ENCODE measurements at regions of chr10 and their contacts with region 1.

Region 1: DNA sequence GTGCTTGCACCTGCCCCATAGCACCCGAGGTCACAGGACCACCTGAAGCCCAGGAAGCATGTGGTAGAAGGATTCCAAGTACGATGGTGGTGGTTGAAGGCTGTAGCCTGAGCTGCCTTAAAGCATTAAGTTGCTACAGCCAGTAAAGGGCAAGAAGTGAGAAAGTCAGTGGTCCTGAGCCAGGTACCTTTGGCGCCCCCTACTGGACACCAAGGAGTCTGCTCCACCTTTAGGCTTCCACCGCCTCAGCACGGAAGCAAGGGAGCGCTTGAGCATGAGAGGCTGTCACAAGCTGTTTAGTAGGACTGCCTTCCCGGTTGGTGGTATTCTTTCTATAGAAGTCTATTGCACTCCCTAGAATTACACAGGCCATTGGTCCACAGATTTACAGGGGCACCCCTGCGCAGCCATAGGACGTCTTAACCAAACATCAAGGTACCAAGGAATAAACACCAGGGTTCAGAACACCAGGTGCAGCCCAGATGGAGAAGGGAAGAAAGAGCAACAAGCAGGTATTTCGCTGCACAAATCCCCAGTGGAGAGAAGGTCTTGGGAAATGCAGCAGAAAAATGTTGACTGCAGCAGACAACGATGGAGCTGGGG is 2.2 kb downstream of the CRTAC1 start:
- DNase-seq: peak; percentile 49 to 70 (median 68)
- ATAC-seq: peak; percentile 25 to 41
- H3K4me3 ChIP-seq: no peak overlapping the region
- H3K27ac ChIP-seq: no peak overlapping the region
- H3K4me1 ChIP-seq: no peaks in the 10 kb centered on the region
- H3K27me3 ChIP-seq: no peaks in the 10 kb centered on the region

Region 2: GRCh38 chr10:97736902-97737769 is 291.1 kb before region 1 on chr10 and contains the start of gene ZFYVE27:
- intact Hi-C with region 1: no loop called
- DNase-seq: peak; percentile 97 to 99 (median 99)
- ATAC-seq: peak; percentile 95 to 96
- H3K4me3 ChIP-seq: peak within 1 kb of the TSS; percentile 74
- H3K27ac ChIP-seq: peak within 1 kb of the TSS; percentile 76
- H3K4me1 ChIP-seq: peaks cover 4% of the 10 kb centered on the region
- H3K27me3 ChIP-seq: no peaks in the 10 kb centered on the region
- total RNA-seq, gene ZFYVE27: 14.8 to 20.6 (median 17.7) TPM

Region 3: DNA sequence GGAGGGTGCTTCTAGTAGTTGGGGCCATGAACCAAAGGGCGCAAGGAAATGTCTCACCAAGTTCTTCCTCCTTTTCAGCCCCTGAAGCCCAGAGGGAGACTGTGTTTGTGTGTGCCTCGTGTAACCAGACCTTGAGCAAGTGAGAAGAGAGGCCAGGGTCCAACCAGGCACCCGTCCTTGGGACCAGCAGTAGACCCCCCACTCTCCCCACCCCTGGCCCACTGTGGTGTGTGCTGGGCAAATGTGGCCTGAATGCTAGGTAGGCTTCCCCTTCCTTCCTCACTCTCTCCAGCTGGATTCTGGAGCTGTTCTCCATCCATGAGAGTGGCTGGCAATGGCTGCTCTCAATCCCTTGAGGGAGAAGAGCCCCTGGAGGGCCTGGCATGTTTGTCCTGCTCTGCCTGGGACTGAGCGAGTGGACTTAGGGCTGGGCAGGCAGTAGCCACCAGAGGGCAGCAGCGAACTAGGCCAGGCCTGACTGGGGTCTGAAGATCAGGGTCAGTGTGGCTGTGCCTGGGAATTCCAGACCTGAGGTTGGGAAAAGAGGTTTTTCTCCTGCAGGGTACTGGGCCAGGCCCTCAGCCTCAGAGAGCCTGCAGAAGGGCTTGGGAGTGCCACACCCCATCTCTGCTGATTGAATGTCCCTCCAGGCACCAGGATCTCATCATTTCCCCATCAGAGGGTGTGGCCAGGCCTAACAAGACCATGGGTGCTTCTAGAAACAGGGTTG is 268.9 kb before region 1 on chr10:
- intact Hi-C with region 1: no loop called
- DNase-seq: peak; percentile 64 to 89 (median 87)
- ATAC-seq: peak; percentile 74 to 81
- H3K4me3 ChIP-seq: no peak overlapping the region
- H3K27ac ChIP-seq: no peak overlapping the region
- H3K4me1 ChIP-seq: no peaks in the 10 kb centered on the region
- H3K27me3 ChIP-seq: no peaks in the 10 kb centered on the region

Region 4: GRCh38 chr10:97898429-97898828 is 129.8 kb before region 1 on chr10:
- intact Hi-C with region 1: no loop called
- DNase-seq: no peak
- ATAC-seq: no peak
- H3K4me3 ChIP-seq: no peak overlapping the region
- H3K27ac ChIP-seq: no peak overlapping the region
- H3K4me1 ChIP-seq: no peaks in the 10 kb centered on the region
- H3K27me3 ChIP-seq: no peaks in the 10 kb centered on the region

Region 5: GRCh38 chr10:97921581-97922021 is 106.7 kb before region 1 on chr10:
- intact Hi-C with region 1: loop called in 3 of 4 experiments (anchors 5 to 10 kb)
- DNase-seq: peak in 1 of 3 donors; percentile 79
- ATAC-seq: peak; percentile 58 to 63
- H3K4me3 ChIP-seq: no peak overlapping the region
- H3K27ac ChIP-seq: peak overlapping the region; percentile 19
- H3K4me1 ChIP-seq: peaks cover 4% of the 10 kb centered on the region
- H3K27me3 ChIP-seq: no peaks in the 10 kb centered on the region

Region 6: GRCh38 chr10:97927622-97928021 is 100.6 kb before region 1 on chr10:
- intact Hi-C with region 1: loop called in 2 of 4 experiments (anchors 5 to 10 kb)
- DNase-seq: no peak
- ATAC-seq: no peak
- H3K4me3 ChIP-seq: no peak overlapping the region
- H3K27ac ChIP-seq: no peak overlapping the region
- H3K4me1 ChIP-seq: no peaks in the 10 kb centered on the region
- H3K27me3 ChIP-seq: no peaks in the 10 kb centered on the region

Region 7: GRCh38 chr10:98080494-98080893 is 52.2 kb after region 1 on chr10:
- intact Hi-C with region 1: no loop called
- DNase-seq: no peak
- ATAC-seq: no peak
- H3K4me3 ChIP-seq: no peak overlapping the region
- H3K27ac ChIP-seq: no peak overlapping the region
- H3K4me1 ChIP-seq: no peaks in the 10 kb centered on the region
- H3K27me3 ChIP-seq: no peaks in the 10 kb centered on the region